ENCODE measurements at regions of chr14 and their contacts with region 1.

Region 1: DNA sequence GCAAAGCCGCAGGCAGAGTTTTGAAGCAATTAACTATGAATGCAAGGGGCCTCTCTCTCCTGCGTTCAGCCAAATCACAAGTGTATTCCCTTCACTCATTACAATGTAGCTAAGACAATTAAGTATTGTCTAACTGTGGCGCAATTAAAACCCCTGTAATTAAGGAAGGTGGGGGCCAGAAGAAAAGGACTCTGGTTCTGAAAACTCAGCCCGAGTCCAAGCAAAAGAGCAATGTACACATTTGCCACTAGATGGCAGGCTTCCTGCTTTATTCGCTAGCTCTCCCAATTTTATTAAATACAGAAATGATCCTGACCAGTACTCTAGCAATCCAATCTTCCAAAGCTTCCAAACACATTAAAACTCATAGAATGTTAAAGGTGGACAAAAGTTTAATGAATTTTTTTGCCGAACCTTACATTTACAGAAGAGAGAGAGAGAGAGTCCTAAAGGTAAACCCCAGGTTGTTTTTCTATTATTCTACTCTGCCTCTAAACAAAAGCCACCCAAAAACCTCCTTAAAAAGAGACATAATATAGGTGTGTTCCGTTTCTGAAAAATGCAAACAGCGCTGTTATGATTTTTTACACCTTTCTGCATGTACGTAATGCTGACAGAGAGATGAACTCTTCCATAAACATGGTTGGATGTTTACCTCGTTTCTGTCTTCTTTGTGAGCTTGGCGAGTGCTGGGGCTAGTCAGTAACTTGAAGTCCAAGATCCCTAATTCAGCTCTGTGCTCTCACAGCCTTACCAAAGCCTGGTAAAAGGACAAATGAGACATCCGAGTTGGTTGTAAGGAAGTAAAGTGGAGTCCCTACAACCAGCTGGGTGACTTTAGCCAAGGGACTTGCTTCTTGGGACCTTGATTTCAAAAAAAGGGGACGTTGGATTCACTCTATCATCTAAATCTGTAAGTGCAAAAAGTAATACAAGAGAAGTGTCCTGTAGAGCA is 50.9 kb upstream of the VASH1 start:
- DNase-seq: peak; percentile 51
- ATAC-seq: no peak
- H3K4me3 Mint-ChIP-seq: no peak overlapping the region
- H3K27ac Mint-ChIP-seq: no peak overlapping the region
- H3K4me1 Mint-ChIP-seq: no peaks in the 10 kb centered on the region
- H3K27me3 Mint-ChIP-seq: peaks cover 11% of the 10 kb centered on the region

Region 2: DNA sequence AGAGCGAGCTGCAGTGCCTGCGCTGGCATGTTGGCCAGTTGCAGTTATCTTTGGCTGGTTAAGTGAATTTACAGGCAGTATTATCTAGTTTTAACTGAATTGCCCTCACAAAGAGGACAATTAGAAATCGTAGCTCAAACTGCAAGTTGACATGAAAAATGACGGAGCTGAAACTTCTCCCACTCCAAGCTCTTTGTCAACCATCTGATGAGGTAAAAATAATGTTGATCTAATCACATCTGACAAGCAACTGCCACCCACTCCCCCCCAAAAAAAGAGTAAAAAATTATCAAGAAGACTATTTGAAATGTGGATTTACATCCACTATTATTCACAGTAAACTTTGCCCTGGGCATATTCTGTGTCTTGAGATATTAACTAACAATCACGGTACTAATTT is 33.8 kb before region 1 on chr14:
- CTCF ChIA-PET with region 1: no interaction called
- POLR2A ChIA-PET with region 1: no interaction called
- DNase-seq: no peak
- ATAC-seq: no peak
- H3K4me3 Mint-ChIP-seq: no peak overlapping the region
- H3K27ac Mint-ChIP-seq: no peak overlapping the region
- H3K4me1 Mint-ChIP-seq: no peaks in the 10 kb centered on the region
- H3K27me3 Mint-ChIP-seq: peaks cover 9% of the 10 kb centered on the region

Region 3: GRCh38 chr14:76720382-76720813 is 10.1 kb after region 1 on chr14:
- CTCF ChIA-PET with region 1: interaction called, 18 read pairs
- POLR2A ChIA-PET with region 1: no interaction called
- DNase-seq: no peak
- ATAC-seq: no peak
- H3K4me3 Mint-ChIP-seq: no peak overlapping the region
- H3K27ac Mint-ChIP-seq: no peak overlapping the region
- H3K4me1 Mint-ChIP-seq: peaks cover 3% of the 10 kb centered on the region
- H3K27me3 Mint-ChIP-seq: peaks cover 33% of the 10 kb centered on the region

Region 4: GRCh38 chr14:76761136-76761959 is 51.0 kb after region 1 on chr14 and contains the start of gene VASH1:
- CTCF ChIA-PET with region 1: interaction called, 14 read pairs
- POLR2A ChIA-PET with region 1: interaction called, 4 read pairs
- DNase-seq: peak; percentile 72
- ATAC-seq: peak; percentile 90
- H3K4me3 Mint-ChIP-seq: peak within 1 kb of the TSS; percentile 74
- H3K27ac Mint-ChIP-seq: no peak within 1 kb of the TSS
- H3K4me1 Mint-ChIP-seq: peaks cover 11% of the 10 kb centered on the region
- H3K27me3 Mint-ChIP-seq: peaks cover 41% of the 10 kb centered on the region
- total RNA-seq, gene VASH1: 3.1 to 3.4 TPM

Region 5: GRCh38 chr14:76776666-76777251 is 66.4 kb after region 1 on chr14:
- CTCF ChIA-PET with region 1: interaction called, 104 read pairs
- POLR2A ChIA-PET with region 1: no interaction called
- DNase-seq: no peak
- ATAC-seq: no peak
- H3K4me3 Mint-ChIP-seq: no peak overlapping the region
- H3K27ac Mint-ChIP-seq: no peak overlapping the region
- H3K4me1 Mint-ChIP-seq: peaks cover 38% of the 10 kb centered on the region
- H3K27me3 Mint-ChIP-seq: no peaks in the 10 kb centered on the region

Region 6: GRCh38 chr14:76812211-76813044 is 102.1 kb after region 1 on chr14 and contains the start of gene ANGEL1:
- CTCF ChIA-PET with region 1: interaction called, 70 read pairs
- POLR2A ChIA-PET with region 1: no interaction called
- DNase-seq: peak; percentile 98
- ATAC-seq: peak; percentile 96
- H3K4me3 Mint-ChIP-seq: peak within 1 kb of the TSS; percentile 90
- H3K27ac Mint-ChIP-seq: peak within 1 kb of the TSS; percentile 85
- H3K4me1 Mint-ChIP-seq: peaks cover 21% of the 10 kb centered on the region
- H3K27me3 Mint-ChIP-seq: no peaks in the 10 kb centered on the region
- total RNA-seq, gene ANGEL1: 11.5 to 13.7 TPM

Region 7: GRCh38 chr14:77043177-77043983 is 333.0 kb after region 1 on chr14:
- CTCF ChIA-PET with region 1: no interaction called
- POLR2A ChIA-PET with region 1: no interaction called
- DNase-seq: peak; percentile 58
- ATAC-seq: peak; percentile 8
- H3K4me3 Mint-ChIP-seq: peak overlapping the region; percentile 12
- H3K27ac Mint-ChIP-seq: peak overlapping the region; percentile 78
- H3K4me1 Mint-ChIP-seq: peaks cover 77% of the 10 kb centered on the region
- H3K27me3 Mint-ChIP-seq: no peaks in the 10 kb centered on the region

Region 8: GRCh38 chr14:77097700-77098528 is 387.6 kb after region 1 on chr14 and contains the start of gene CIPC:
- CTCF ChIA-PET with region 1: interaction called, 12 read pairs
- POLR2A ChIA-PET with region 1: no interaction called
- DNase-seq: peak; percentile 100
- ATAC-seq: peak; percentile 94
- H3K4me3 Mint-ChIP-seq: peak within 1 kb of the TSS; percentile 84
- H3K27ac Mint-ChIP-seq: peak within 1 kb of the TSS; percentile 93
- H3K4me1 Mint-ChIP-seq: peaks cover 31% of the 10 kb centered on the region
- H3K27me3 Mint-ChIP-seq: peaks cover 4% of the 10 kb centered on the region
- total RNA-seq, gene CIPC: 11.4 to 11.7 TPM

Measured in activated CD8-positive, alpha-beta T cell treated with anti-CD3 and anti-CD28 coated beads, Interleukin-2, amount 10 ng/mL, durations not matched to agents 7 days and 5 days (primary cell).